OCI-LY7 (cell line): ENCODE measurements at regions of chr13 and their contacts with region 1.

Region 1: DNA sequence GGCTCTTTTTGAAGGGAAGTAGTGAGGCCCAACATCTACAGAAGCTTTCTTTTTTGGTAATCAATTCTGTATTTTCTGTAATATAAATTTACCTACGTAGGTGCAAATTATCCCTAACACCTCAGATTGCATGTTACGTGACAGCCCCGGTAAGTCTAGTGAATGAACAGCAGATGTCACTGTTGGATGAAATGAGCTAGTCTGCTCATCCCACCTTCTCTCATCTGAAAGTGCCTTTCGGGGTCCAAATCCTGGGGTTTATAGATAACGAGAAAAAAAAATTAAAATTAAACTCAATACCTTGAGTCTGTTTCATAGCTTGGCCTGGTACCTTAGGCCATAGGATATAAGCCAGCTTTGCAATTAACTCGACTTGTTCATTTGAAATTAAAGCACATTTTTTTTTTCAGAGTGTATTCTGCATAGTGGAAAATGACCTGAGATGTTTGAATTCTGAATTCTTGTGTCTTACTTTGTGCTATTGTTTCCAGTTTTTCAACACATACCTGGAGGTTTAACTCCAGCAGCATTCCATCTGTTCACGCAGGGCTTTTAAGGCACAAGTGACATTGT is 548.2 kb downstream of the GPC5 start:
- DNase-seq: peak; percentile 64
- H3K4me3 ChIP-seq: no peak overlapping the region
- H3K27ac ChIP-seq: no peak overlapping the region
- H3K4me1 ChIP-seq: no peaks in the 10 kb centered on the region
- CTCF ChIP-seq: no peak

Region 2: GRCh38 chr13:91863699-91864098 is 82.9 kb before region 1 on chr13:
- CTCF ChIA-PET with region 1: no interaction called
- POLR2A ChIA-PET with region 1: no interaction called
- intact Hi-C with region 1: no loop called
- DNase-seq: no peak
- H3K4me3 ChIP-seq: no peak overlapping the region
- H3K27ac ChIP-seq: no peak overlapping the region
- H3K4me1 ChIP-seq: no peaks in the 10 kb centered on the region
- CTCF ChIP-seq: no peak

Region 3: DNA sequence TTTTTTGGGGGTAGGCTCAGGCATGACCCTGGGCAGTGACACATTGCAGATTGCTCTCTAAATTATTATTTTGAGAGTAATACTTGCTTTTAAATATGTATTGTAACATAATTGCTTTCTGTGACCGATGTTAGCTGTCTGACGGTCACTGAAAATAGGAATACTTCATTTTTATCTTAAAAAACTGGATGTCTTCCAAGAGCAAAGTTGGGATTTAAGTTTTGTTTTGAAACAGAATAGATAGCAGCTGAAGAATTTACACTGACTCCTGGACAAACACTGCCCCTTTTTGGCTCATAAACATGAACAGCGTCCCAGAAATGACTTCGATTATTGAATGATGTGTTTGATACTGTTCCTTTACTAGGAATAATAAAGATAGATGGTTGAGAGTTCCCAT is 12.2 kb before region 1 on chr13:
- CTCF ChIA-PET with region 1: no interaction called
- POLR2A ChIA-PET with region 1: interaction called, 10 read pairs
- intact Hi-C with region 1: no loop called
- DNase-seq: no peak
- H3K4me3 ChIP-seq: no peak overlapping the region
- H3K27ac ChIP-seq: no peak overlapping the region
- H3K4me1 ChIP-seq: no peaks in the 10 kb centered on the region
- CTCF ChIP-seq: no peak